ENCODE measurements at regions of chr9 and their contacts with region 1.

Region 1: DNA sequence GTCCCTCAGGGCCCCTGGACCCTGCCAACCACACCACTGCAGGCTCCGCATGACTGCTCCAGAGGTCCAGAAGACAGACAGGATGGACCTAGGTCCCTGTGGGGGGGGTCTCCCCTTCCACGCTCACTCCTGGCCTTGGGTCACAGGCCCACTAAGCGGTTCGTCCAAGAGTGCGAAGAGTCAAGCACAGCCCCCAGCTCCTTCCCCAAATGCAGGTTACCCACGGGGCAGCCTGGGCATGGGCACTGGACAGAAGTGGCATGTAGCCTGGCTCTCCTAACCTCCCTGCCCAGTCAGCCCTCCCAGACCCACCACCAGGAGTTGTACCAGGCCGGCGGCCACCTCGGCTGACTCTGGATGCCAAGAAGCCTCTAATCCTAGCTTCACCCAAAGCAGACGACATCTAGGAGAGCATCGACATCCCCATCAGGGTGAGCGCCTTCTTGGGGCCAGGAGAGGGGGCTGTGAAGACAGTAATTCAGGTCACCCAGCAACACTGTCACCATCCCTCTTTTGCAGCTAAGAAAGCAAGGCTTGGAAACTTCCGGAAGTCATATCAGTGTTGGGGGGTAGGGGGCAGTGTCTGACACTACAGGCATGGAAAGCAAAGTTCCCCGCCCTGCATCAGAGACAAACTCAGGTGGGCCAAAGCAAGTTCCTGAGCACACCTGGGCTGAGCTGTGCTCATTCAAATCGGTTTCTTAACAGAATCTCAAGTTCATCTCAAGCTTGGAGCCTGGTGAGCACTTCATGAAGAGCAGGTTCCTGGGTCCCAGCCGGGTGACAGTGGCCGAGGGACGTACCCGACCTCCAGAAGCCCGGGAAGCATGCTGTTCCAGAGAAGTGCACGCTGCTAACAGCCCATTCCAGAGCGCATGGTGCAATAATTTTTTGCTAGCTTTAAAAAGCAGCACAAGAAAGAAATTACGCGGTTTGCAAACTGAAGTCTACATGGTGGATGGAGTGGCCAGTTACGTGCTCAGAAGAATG is 68.7 kb downstream of the SEMA4D start:
- DNase-seq: peak; percentile 72
- H3K4me3 Mint-ChIP-seq: no peak overlapping the region
- H3K27ac Mint-ChIP-seq: peak overlapping the region; percentile 75
- H3K4me1 Mint-ChIP-seq: peaks cover 70% of the 10 kb centered on the region
- H3K27me3 Mint-ChIP-seq: no peaks in the 10 kb centered on the region

Region 2: GRCh38 chr9:89410641-89411350 is 18.4 kb before region 1 on chr9:
- CTCF ChIA-PET with region 1: interaction called, 30 read pairs
- DNase-seq: peak; percentile 44
- H3K4me3 Mint-ChIP-seq: no peak overlapping the region
- H3K27ac Mint-ChIP-seq: peak overlapping the region; percentile 84
- H3K4me1 Mint-ChIP-seq: peaks cover 78% of the 10 kb centered on the region
- H3K27me3 Mint-ChIP-seq: no peaks in the 10 kb centered on the region

Region 3: GRCh38 chr9:89440548-89441370 is 11.6 kb after region 1 on chr9:
- CTCF ChIA-PET with region 1: interaction called, 15 read pairs
- DNase-seq: no peak
- H3K4me3 Mint-ChIP-seq: no peak overlapping the region
- H3K27ac Mint-ChIP-seq: peak overlapping the region; percentile 86
- H3K4me1 Mint-ChIP-seq: peaks cover 94% of the 10 kb centered on the region
- H3K27me3 Mint-ChIP-seq: no peaks in the 10 kb centered on the region

Region 4: DNA sequence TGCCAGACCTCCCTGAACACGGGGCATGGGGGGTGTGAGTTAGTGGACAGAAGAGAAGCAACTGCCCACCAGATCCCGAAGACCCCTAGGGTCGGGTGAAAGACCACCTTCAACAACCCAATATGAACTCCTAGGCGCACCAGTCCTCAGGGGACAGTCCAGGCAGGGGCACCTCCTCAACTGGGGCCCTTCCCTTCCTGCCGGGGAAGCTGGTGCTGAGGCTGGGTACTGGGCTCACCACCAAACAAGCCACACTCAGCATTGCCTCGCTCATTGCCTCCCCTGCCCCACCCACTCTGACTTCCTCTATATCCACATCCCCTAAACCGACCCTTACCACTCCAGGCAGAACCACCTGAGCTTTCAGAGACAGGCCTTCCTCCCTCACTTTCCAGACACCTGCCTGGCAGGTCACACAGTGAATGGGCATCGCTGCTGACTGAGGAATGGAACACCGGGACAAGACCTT is 26.2 kb after region 1 on chr9:
- CTCF ChIA-PET with region 1: interaction called, 13 read pairs
- DNase-seq: peak; percentile 69
- H3K4me3 Mint-ChIP-seq: peak overlapping the region; percentile 36
- H3K27ac Mint-ChIP-seq: peak overlapping the region; percentile 84
- H3K4me1 Mint-ChIP-seq: peaks cover 92% of the 10 kb centered on the region
- H3K27me3 Mint-ChIP-seq: no peaks in the 10 kb centered on the region

Region 5: GRCh38 chr9:89489548-89490530 is 60.6 kb after region 1 on chr9:
- CTCF ChIA-PET with region 1: no interaction called
- DNase-seq: no peak
- H3K4me3 Mint-ChIP-seq: peak overlapping the region; percentile 32
- H3K27ac Mint-ChIP-seq: peak overlapping the region; percentile 81
- H3K4me1 Mint-ChIP-seq: peaks cover 94% of the 10 kb centered on the region
- H3K27me3 Mint-ChIP-seq: no peaks in the 10 kb centered on the region